Heart left ventricle (tissue), 16 donors: ENCODE measurements at regions of chr22 and their contacts with region 1.

Region 1: GRCh38 chr22:38181453-38182247 is at the start of gene PLA2G6:
- DNase-seq: peak; percentile 99
- ATAC-seq: peak; percentile 96 to 97 (median 96)
- H3K4me3 ChIP-seq: peak within 1 kb of the TSS; percentile 48 to 79 (median 64)
- H3K27ac ChIP-seq: peak within 1 kb of the TSS; percentile 75 to 98 (median 90)
- H3K4me1 ChIP-seq: peaks cover 3 to 54% (median 23%) of the 10 kb centered on the region in 12 donors
- H3K27me3 ChIP-seq: no peaks in the 10 kb centered on the region
- CTCF ChIP-seq: no peak
- POLR2A ChIP-seq: peak in 1 of 2 donors; percentile 59
- total RNA-seq, gene PLA2G6: 6.1 to 17.9 (median 11.0) TPM

Region 2: GRCh38 chr22:38201710-38202436 is 20.2 kb after region 1 on chr22 and contains the start of gene MAFF:
- intact Hi-C with region 1: loop called in 1 of 10 experiments (anchors 1 kb)
- DNase-seq: peak; percentile 96 to 98 (median 97)
- ATAC-seq: peak; percentile 69 to 88 (median 86)
- H3K4me3 ChIP-seq: peak within 1 kb of the TSS; percentile 73 to 98 (median 80)
- H3K27ac ChIP-seq: peak within 1 kb of the TSS; percentile 95 to 100 (median 98)
- H3K4me1 ChIP-seq: peaks cover 6 to 37% (median 26%) of the 10 kb centered on the region in 12 donors
- H3K27me3 ChIP-seq: no peaks in the 10 kb centered on the region
- CTCF ChIP-seq: no peak
- POLR2A ChIP-seq: peak; percentile 88 to 94
- total RNA-seq, gene MAFF: 1.9 to 35.8 (median 4.0) TPM